Dorsolateral prefrontal cortex (tissue), 120 donors: ENCODE measurements at regions of chr17 and their contacts with region 1.

Region 1: GRCh38 chr17:5486204-5487124 is at the start of gene MIS12:
- DNase-seq: peak; percentile 94 to 99 (median 99)
- H3K4me3 ChIP-seq: peak within 1 kb of the TSS; percentile 72 to 100 (median 95)
- H3K27ac ChIP-seq: peak within 1 kb of the TSS; percentile 89 to 100 (median 98)
- H3K27me3 ChIP-seq: no peaks in the 10 kb centered on the region
- CTCF ChIP-seq: peak in 5 of 56 donors; percentile 8 to 30 (median 11)
- total RNA-seq, gene MIS12: 8.2 to 24.0 (median 13.7) TPM

Region 2: GRCh38 chr17:5468075-5468473 is 18.4 kb before region 1 on chr17:
- intact Hi-C with region 1: loop called (anchors 1 kb)
- DNase-seq: peak in 1 of 10 donors; percentile 11
- H3K4me3 ChIP-seq: peak overlapping the region; percentile 77 to 100 (median 97)
- H3K27ac ChIP-seq: peak overlapping the region in 30 of 59 donors; percentile 47 to 92 (median 77)
- H3K27me3 ChIP-seq: no peaks in the 10 kb centered on the region
- CTCF ChIP-seq: no peak

Region 3: DNA sequence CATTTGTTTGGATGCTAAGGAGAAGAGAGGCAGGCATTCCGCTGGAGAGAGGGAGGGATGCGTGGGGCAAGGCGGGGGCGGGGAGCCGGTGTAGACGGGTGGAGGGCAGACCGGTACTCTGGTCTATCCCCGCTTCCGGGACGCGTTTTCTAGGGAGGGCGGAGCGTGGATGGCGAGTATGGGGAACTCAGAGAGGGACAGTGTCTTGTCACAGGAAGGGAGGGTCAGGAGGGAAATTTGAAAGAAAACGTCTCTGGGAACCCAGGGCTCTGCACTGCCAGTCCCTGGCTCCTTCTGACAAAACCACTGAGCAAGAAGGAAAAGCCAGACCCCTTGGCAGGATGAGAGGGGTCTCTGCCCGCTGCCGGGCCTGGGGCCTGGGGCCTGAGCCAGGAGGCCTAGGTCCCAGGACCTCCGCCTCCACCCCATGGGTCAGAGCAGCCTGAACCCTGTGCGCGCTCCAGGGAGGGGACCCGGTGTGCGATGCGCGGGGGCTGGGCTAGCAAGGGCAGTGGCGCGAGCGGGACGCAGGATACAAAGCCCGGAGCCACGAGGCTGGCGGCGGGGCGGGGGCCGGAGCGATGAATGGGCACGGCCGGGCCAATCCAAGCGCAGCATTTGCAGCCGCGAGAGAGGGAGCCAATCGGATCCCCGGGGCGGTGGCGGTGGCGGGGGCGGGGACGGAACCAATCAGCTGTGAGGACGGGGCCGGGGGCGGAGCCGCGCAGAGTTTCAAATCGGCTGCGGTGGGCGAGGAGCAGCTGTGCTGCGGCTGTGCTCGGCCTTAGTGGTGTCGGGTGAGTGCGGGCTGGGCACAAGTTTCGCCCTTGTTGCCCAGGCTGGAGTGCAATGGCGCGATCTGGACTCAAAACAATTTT is 957.5 kb after region 1 on chr17 and contains the start of gene PIMREG:
- intact Hi-C with region 1: loop called in 1 of 2 experiments (anchors 10 kb)
- DNase-seq: peak; percentile 92 to 97 (median 96)
- H3K4me3 ChIP-seq: peak within 1 kb of the TSS; percentile 51 to 98 (median 72)
- H3K27ac ChIP-seq: peak within 1 kb of the TSS in 32 of 59 donors; percentile 2 to 79 (median 58)
- H3K27me3 ChIP-seq: no peaks in the 10 kb centered on the region
- CTCF ChIP-seq: peak in 4 of 56 donors; percentile 10 to 29 (median 20)
- total RNA-seq, gene PIMREG: 0.35 to 1.1 (median 0.56) TPM in 12 of 120 experiments, not detected in the others